Activated T-helper 2 cell treated with anti-CD3 and anti-CD28 coated beads, Interferon-gamma antibody, Interleukin-2, Interleukin-4, amounts not matched to agents 10 μg/mL and 5 μg/mL and 100 μg/mL, durations not matched to agents 14 hours and 24 hours and 36 hours (primary cell): ENCODE measurements at regions of chr19 and their contacts with region 1.

Region 1: GRCh38 chr19:18007044-18007916 is 690 bp upstream of the ARRDC2 start:
- DNase-seq: peak; percentile 73
- H3K4me3 Mint-ChIP-seq: peak overlapping the region; percentile 85
- H3K27ac Mint-ChIP-seq: peak overlapping the region; percentile 84
- H3K4me1 Mint-ChIP-seq: peaks cover 24% of the 10 kb centered on the region
- H3K27me3 Mint-ChIP-seq: no peaks in the 10 kb centered on the region

Region 2: GRCh38 chr19:17766543-17767131 is 240.6 kb before region 1 on chr19:
- intact Hi-C with region 1: no loop called
- DNase-seq: peak; percentile 38
- H3K4me3 Mint-ChIP-seq: no peak overlapping the region
- H3K27ac Mint-ChIP-seq: no peak overlapping the region
- H3K4me1 Mint-ChIP-seq: peaks cover 5% of the 10 kb centered on the region
- H3K27me3 Mint-ChIP-seq: no peaks in the 10 kb centered on the region

Region 3: DNA sequence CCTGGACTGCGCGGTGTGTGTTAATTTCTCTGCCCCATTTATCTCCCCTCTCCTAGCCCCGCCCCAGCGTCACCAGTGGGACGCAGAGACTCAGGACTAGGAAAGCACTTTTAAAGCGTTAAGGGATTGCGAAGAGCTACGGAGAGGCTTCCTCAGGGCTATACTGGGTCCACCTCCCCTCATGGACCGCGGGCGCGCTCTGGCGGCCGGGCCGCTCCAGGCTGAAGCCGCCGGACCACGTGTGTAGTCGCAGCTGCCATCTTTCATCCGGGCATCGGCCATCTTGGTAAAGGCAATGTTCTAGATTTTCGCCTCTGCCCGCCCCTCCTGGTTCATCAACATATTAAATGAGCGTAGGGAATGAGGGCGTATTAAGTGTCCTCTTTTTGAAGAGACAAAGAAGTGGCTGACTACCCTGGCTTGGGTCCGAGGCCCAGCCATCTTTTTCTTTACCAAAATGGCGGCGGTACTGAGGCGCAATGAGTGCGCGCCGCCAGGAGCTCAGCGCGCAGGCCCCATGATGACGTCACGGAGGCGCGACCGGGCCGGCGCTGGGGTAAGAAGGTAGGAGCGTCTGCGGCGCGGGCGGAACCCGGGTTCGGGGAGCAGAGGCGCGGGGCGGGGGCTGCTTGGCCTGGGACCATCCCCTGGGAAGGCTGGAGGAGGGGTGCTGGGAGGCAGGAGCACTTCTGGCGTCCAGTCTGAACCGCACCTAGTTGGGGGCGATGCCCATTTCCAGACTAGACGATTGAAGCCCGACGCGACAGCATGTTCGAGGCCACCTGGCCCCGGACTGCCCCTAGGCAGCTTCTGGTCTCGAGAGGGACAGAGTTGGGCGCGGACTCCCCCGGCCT is 74.6 kb before region 1 on chr19 and contains the start of gene CCDC124:
- intact Hi-C with region 1: no loop called
- DNase-seq: peak; percentile 89
- H3K4me3 Mint-ChIP-seq: peak within 1 kb of the TSS; percentile 97
- H3K27ac Mint-ChIP-seq: peak within 1 kb of the TSS; percentile 94
- H3K4me1 Mint-ChIP-seq: peaks cover 14% of the 10 kb centered on the region
- H3K27me3 Mint-ChIP-seq: no peaks in the 10 kb centered on the region
- total RNA-seq, gene CCDC124: 116 and 123 TPM in 2 replicates

Region 4: GRCh38 chr19:18023622-18024251 is 16.5 kb after region 1 on chr19:
- intact Hi-C with region 1: loop called (anchors 2 kb)
- DNase-seq: no peak
- H3K4me3 Mint-ChIP-seq: peak overlapping the region; percentile 63
- H3K27ac Mint-ChIP-seq: peak overlapping the region; percentile 76
- H3K4me1 Mint-ChIP-seq: peaks cover 42% of the 10 kb centered on the region
- H3K27me3 Mint-ChIP-seq: no peaks in the 10 kb centered on the region

Region 5: GRCh38 chr19:18044825-18045304 is 37.6 kb after region 1 on chr19:
- intact Hi-C with region 1: loop called (anchors 2 kb)
- DNase-seq: peak; percentile 86
- H3K4me3 Mint-ChIP-seq: peak overlapping the region; percentile 61
- H3K27ac Mint-ChIP-seq: peak overlapping the region; percentile 86
- H3K4me1 Mint-ChIP-seq: peaks cover 32% of the 10 kb centered on the region
- H3K27me3 Mint-ChIP-seq: peaks cover 2% of the 10 kb centered on the region

Region 6: GRCh38 chr19:18058208-18059030 is 51.1 kb after region 1 on chr19:
- intact Hi-C with region 1: loop called (anchors 1 kb)
- DNase-seq: peak; percentile 68
- H3K4me3 Mint-ChIP-seq: no peak overlapping the region
- H3K27ac Mint-ChIP-seq: peak overlapping the region; percentile 67
- H3K4me1 Mint-ChIP-seq: peaks cover 10% of the 10 kb centered on the region
- H3K27me3 Mint-ChIP-seq: no peaks in the 10 kb centered on the region

Region 7: DNA sequence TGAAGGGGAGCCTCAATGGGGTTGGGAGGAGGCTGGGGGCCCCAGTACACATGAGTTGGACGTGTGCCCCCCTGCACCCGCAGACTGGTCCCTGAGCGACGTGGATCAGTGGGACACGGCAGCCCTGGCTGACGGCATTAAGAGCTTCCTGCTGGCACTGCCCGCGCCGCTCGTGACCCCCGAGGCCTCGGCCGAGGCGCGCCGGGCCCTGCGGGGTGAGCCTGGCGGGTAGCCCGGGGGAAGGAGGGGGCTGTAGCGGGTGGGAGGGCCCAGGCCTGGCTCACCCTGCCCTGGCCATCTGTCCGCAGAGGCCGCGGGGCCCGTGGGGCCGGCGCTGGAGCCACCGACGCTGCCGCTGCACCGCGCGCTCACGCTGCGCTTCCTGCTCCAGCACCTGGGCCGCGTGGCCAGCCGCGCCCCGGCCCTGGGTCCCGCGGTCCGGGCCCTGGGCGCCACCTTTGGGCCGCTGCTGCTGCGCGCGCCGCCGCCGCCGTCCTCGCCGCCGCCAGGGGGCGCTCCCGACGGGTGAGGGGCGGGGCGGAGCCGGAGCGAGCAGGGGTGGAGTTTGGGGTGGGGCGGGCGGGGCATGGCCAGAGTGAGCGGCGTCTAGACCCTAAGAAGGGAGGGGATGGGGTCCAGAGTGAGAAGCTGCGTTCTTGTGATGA is 153.8 kb after region 1 on chr19:
- intact Hi-C with region 1: loop called (anchors 10 kb)
- DNase-seq: peak; percentile 78
- H3K4me3 Mint-ChIP-seq: peak overlapping the region; percentile 57
- H3K27ac Mint-ChIP-seq: peak overlapping the region; percentile 50
- H3K4me1 Mint-ChIP-seq: peaks cover 5% of the 10 kb centered on the region
- H3K27me3 Mint-ChIP-seq: no peaks in the 10 kb centered on the region